Endothelial cell of umbilical vein (primary cell): ENCODE measurements at regions of chrX and their contacts with region 1.

Region 1: DNA sequence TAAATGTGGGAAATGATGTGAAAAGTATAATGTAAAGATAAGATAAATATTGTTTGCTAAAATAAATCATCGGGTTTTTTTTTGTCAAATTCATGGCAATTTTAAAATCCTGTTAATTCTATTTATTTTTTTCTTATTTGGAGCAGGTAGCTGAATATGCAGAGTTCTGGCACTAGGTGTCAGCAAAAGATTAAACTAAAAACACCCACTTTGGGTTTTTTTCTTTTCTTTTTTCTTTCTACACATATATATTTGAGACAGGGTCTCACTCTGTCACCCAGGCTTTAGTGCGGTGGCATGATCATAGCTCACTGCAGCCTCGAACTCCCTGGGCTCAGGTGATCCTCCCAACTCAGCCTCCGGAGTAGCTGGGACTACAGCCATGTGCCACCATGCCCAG is 6.9 kb upstream of the RAP2C start:
- DNase-seq: no peak
- H3K4me3 ChIP-seq: no peak overlapping the region
- H3K27ac ChIP-seq: no peak overlapping the region
- H3K4me1 ChIP-seq: no peaks in the 10 kb centered on the region
- H3K27me3 ChIP-seq: no peaks in the 10 kb centered on the region
- CTCF ChIP-seq: peak in 1 of 2 donors; percentile 14
- POLR2A ChIP-seq: no peak

Region 2: DNA sequence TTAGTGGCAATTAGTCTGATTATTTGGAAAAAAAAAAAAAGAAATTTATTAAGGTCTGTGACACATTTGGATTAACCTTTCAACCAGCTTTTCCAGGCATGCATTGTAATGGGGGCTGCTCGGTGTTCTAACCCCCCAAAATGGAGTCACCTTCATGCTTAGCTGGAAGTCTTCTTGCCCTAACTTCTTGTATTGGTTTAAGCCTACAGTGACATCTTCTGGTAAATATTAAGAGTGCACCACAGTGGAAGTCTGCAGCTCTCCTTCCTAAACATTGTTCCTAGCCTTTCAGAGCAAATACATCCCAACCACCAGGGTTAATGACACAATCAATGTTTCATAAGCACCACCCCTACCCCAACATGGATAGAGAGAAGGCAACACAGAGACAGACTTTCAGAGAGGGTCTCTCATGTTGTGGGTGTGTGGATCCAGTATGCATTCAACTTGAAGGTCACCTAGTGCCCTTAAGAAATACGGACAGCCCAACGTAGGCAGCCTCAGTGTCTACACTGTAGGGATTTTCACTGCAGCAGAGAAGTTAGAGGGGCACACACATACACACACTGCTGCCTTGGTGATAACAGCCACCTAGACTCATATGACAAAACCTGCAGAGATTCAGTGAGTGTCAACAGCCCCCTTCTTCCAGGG is 405.5 kb after region 1 on chrX:
- CTCF ChIA-PET with region 1: interaction called, 35 read pairs
- POLR2A ChIA-PET with region 1: no interaction called
- dilution Hi-C with region 1: no loop called
- intact Hi-C with region 1: loop called (anchors 1 kb)
- DNase-seq: peak; percentile 33
- H3K4me3 ChIP-seq: no peak overlapping the region
- H3K27ac ChIP-seq: no peak overlapping the region
- H3K4me1 ChIP-seq: no peaks in the 10 kb centered on the region
- H3K27me3 ChIP-seq: no peaks in the 10 kb centered on the region
- CTCF ChIP-seq: peak; percentile 27 to 30
- POLR2A ChIP-seq: no peak